PC-3 (cell line): ENCODE measurements at regions of chr4 and their contacts with region 1.

Region 1: GRCh38 chr4:103150677-103151076 is 47.5 kb downstream of the CENPE start:
- DNase-seq: peak; percentile 89
- ATAC-seq: peak; percentile 94
- H3K4me3 ChIP-seq: no peak overlapping the region
- H3K27ac ChIP-seq: peak overlapping the region; percentile 97
- H3K4me1 ChIP-seq: peaks cover 33% of the 10 kb centered on the region
- H3K27me3 ChIP-seq: no peaks in the 10 kb centered on the region
- CTCF ChIP-seq: no peak

Region 2: GRCh38 chr4:101643186-101643837 is 1507.4 kb before region 1 on chr4:
- CTCF ChIA-PET with region 1: no interaction called
- POLR2A ChIA-PET with region 1: no interaction called
- intact Hi-C with region 1: no loop called
- DNase-seq: peak; percentile 26
- ATAC-seq: no peak
- H3K4me3 ChIP-seq: no peak overlapping the region
- H3K27ac ChIP-seq: no peak overlapping the region
- H3K4me1 ChIP-seq: no peaks in the 10 kb centered on the region
- H3K27me3 ChIP-seq: no peaks in the 10 kb centered on the region
- CTCF ChIP-seq: no peak

Region 3: GRCh38 chr4:103198111-103198765 is 47.6 kb after region 1 on chr4 and contains the start of gene CENPE:
- CTCF ChIA-PET with region 1: no interaction called
- POLR2A ChIA-PET with region 1: no interaction called
- intact Hi-C with region 1: loop called (anchors 5 kb)
- DNase-seq: peak; percentile 83
- ATAC-seq: peak; percentile 79
- H3K4me3 ChIP-seq: peak within 1 kb of the TSS; percentile 99
- H3K27ac ChIP-seq: peak within 1 kb of the TSS; percentile 54
- H3K4me1 ChIP-seq: peaks cover 6% of the 10 kb centered on the region; the same call in 1 of the 2 replicates
- H3K27me3 ChIP-seq: no peaks in the 10 kb centered on the region
- CTCF ChIP-seq: no peak
- total RNA-seq, gene CENPE: 15.3 and 17.3 TPM in 2 replicates